ENCODE measurements at regions of chr2 and their contacts with region 1.

Region 1: GRCh38 chr2:174322746-174323145 is 12.0 kb upstream of the SP9 start:
- DNase-seq: no peak
- H3K4me3 ChIP-seq: no peak overlapping the region
- H3K27ac ChIP-seq: no peak overlapping the region
- H3K4me1 ChIP-seq: peaks cover 11% of the 10 kb centered on the region
- H3K27me3 ChIP-seq: peaks cover 55% of the 10 kb centered on the region
- CTCF ChIP-seq: no peak

Region 2: GRCh38 chr2:174145827-174146226 is 176.9 kb before region 1 on chr2:
- CTCF ChIA-PET with region 1: no interaction called
- POLR2A ChIA-PET with region 1: interaction called, 16 read pairs
- intact Hi-C with region 1: no loop called
- DNase-seq: peak; percentile 19
- H3K4me3 ChIP-seq: no peak overlapping the region
- H3K27ac ChIP-seq: no peak overlapping the region
- H3K4me1 ChIP-seq: no peaks in the 10 kb centered on the region
- H3K27me3 ChIP-seq: no peaks in the 10 kb centered on the region
- CTCF ChIP-seq: peak; percentile 46

Measured in A673 (cell line).